ENCODE measurements at regions of chr10 and their contacts with region 1.

Region 1: GRCh38 chr10:26887611-26888188 is 26.9 kb upstream of the ABI1 start:
- DNase-seq: no peak
- ATAC-seq: no peak
- H3K4me3 ChIP-seq: no peak overlapping the region
- H3K27ac ChIP-seq: no peak overlapping the region
- H3K4me1 ChIP-seq: no peaks in the 10 kb centered on the region
- H3K27me3 ChIP-seq: peaks cover 0 to 6% (median 2%) of the 10 kb centered on the region in 4 donors
- CTCF ChIP-seq: no peak

Region 2: GRCh38 chr10:26725837-26726727 is 161.6 kb before region 1 on chr10:
- intact Hi-C with region 1: loop called (anchors 5 to 10 kb)
- DNase-seq: peak; percentile 31 to 79 (median 70)
- ATAC-seq: peak; percentile 53 to 90 (median 90)
- H3K4me3 ChIP-seq: no peak overlapping the region
- H3K27ac ChIP-seq: no peak overlapping the region
- H3K4me1 ChIP-seq: no peaks in the 10 kb centered on the region
- H3K27me3 ChIP-seq: no peaks in the 10 kb centered on the region
- CTCF ChIP-seq: peak; percentile 57 to 75 (median 68)

Region 3: GRCh38 chr10:26733750-26734568 is 153.7 kb before region 1 on chr10:
- intact Hi-C with region 1: loop called (anchors 5 to 10 kb)
- DNase-seq: peak in 1 of 6 donors; percentile 4
- ATAC-seq: peak in 3 of 4 donors; percentile 56 to 63 (median 59)
- H3K4me3 ChIP-seq: no peak overlapping the region
- H3K27ac ChIP-seq: no peak overlapping the region
- H3K4me1 ChIP-seq: no peaks in the 10 kb centered on the region
- H3K27me3 ChIP-seq: no peaks in the 10 kb centered on the region
- CTCF ChIP-seq: no peak

Region 4: GRCh38 chr10:26829810-26830515 is 57.7 kb before region 1 on chr10:
- intact Hi-C with region 1: no loop called
- DNase-seq: no peak
- ATAC-seq: no peak
- H3K4me3 ChIP-seq: no peak overlapping the region
- H3K27ac ChIP-seq: no peak overlapping the region
- H3K4me1 ChIP-seq: no peaks in the 10 kb centered on the region
- H3K27me3 ChIP-seq: no peaks in the 10 kb centered on the region
- CTCF ChIP-seq: no peak

Region 5: GRCh38 chr10:27083063-27083462 is 195.4 kb after region 1 on chr10:
- intact Hi-C with region 1: no loop called
- DNase-seq: no peak
- ATAC-seq: peak in 1 of 4 donors; percentile 36
- H3K4me3 ChIP-seq: no peak overlapping the region
- H3K27ac ChIP-seq: no peak overlapping the region
- H3K4me1 ChIP-seq: peaks cover 0 to 5% (median 4%) of the 10 kb centered on the region in 3 donors
- H3K27me3 ChIP-seq: no peaks in the 10 kb centered on the region
- CTCF ChIP-seq: no peak

Region 6: DNA sequence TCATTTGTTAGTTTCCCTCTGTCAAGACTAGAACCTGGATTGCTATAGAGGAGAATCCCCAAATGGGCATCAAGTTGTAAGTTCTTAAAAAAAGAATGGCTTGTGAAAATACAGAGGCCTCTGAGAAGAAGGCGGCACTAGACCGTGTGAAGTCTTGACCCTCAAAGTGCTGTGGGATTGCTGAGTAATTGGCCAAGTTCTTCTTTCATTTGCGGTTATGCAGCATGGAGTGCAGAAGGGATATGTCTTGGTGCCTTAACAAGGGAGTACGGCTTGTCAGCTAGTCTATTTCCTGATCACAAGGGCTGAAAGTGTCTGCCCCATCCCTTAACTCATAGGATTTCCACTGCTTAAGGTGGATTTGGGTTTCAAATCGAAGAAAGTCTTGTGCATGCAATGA is 776.8 kb after region 1 on chr10:
- intact Hi-C with region 1: no loop called
- DNase-seq: no peak
- ATAC-seq: peak in 2 of 4 donors; percentile 29 to 48
- H3K4me3 ChIP-seq: no peak overlapping the region
- H3K27ac ChIP-seq: no peak overlapping the region
- H3K4me1 ChIP-seq: no peaks in the 10 kb centered on the region
- H3K27me3 ChIP-seq: no peaks in the 10 kb centered on the region
- CTCF ChIP-seq: no peak